Esophagus squamous epithelium (tissue), 5 donors: ENCODE measurements at regions of chr10 and their contacts with region 1.

Region 1: GRCh38 chr10:71893920-71894319 is 42.9 kb upstream of the PSAP start:
- DNase-seq: no peak
- H3K4me3 ChIP-seq: no peak overlapping the region
- H3K27ac ChIP-seq: no peak overlapping the region
- H3K4me1 ChIP-seq: peaks cover 9 to 28% (median 12%) of the 10 kb centered on the region in 3 donors
- H3K27me3 ChIP-seq: no peaks in the 10 kb centered on the region
- CTCF ChIP-seq: no peak
- POLR2A ChIP-seq: no peak

Region 2: GRCh38 chr10:71713135-71714030 is 180.5 kb before region 1 on chr10:
- intact Hi-C with region 1: loop called (anchors 10 kb)
- DNase-seq: no peak
- H3K4me3 ChIP-seq: peak overlapping the region in 1 of 4 donors; percentile 37
- H3K27ac ChIP-seq: peak overlapping the region; percentile 87 to 98 (median 94)
- H3K4me1 ChIP-seq: peaks cover 40 to 67% (median 59%) of the 10 kb centered on the region in 3 donors
- H3K27me3 ChIP-seq: no peaks in the 10 kb centered on the region
- CTCF ChIP-seq: peak in 3 of 6 experiments; percentile 18 to 41 (median 30)
- POLR2A ChIP-seq: peak in 1 of 4 donors; percentile 62

Region 3: GRCh38 chr10:71835671-71836595 is 58.0 kb before region 1 on chr10:
- intact Hi-C with region 1: loop called (anchors 10 kb)
- DNase-seq: peak; percentile 32
- H3K4me3 ChIP-seq: no peak overlapping the region
- H3K27ac ChIP-seq: peak overlapping the region; percentile 37 to 77 (median 69)
- H3K4me1 ChIP-seq: peaks cover 17 to 97% (median 58%) of the 10 kb centered on the region in 3 donors
- H3K27me3 ChIP-seq: no peaks in the 10 kb centered on the region
- CTCF ChIP-seq: no peak
- POLR2A ChIP-seq: no peak

Region 4: GRCh38 chr10:72048450-72049124 is 154.7 kb after region 1 on chr10:
- intact Hi-C with region 1: loop called (anchors 5 kb)
- DNase-seq: peak; percentile 13
- H3K4me3 ChIP-seq: no peak overlapping the region
- H3K27ac ChIP-seq: no peak overlapping the region
- H3K4me1 ChIP-seq: peaks cover 7 to 27% (median 10%) of the 10 kb centered on the region in 3 donors
- H3K27me3 ChIP-seq: no peaks in the 10 kb centered on the region
- CTCF ChIP-seq: peak; percentile 96 to 100 (median 100)
- POLR2A ChIP-seq: no peak